HepG2 (cell line): ENCODE measurements at regions of chr6 and their contacts with region 1.

Region 1: GRCh38 chr6:120173250-120173649 is 823.7 kb upstream of the MAN1A1 start:
- DNase-seq: no peak
- ATAC-seq: no peak
- H3K4me3 ChIP-seq: no peak overlapping the region
- H3K27ac ChIP-seq: no peak overlapping the region
- H3K4me1 ChIP-seq: peaks cover 8% of the 10 kb centered on the region
- H3K27me3 ChIP-seq: no peaks in the 10 kb centered on the region
- CTCF ChIP-seq: no peak
- EP300 ChIP-seq: no peak
- POLR2A ChIP-seq: no peak
- RAD21 ChIP-seq: no peak

Region 2: GRCh38 chr6:120290964-120291363 is 117.7 kb after region 1 on chr6:
- CTCF ChIA-PET with region 1: no interaction called
- POLR2A ChIA-PET with region 1: no interaction called
- in situ Hi-C with region 1: no loop called
- intact Hi-C with region 1: loop called (anchors 1 kb)
- DNase-seq: no peak
- ATAC-seq: no peak
- H3K4me3 ChIP-seq: no peak overlapping the region
- H3K27ac ChIP-seq: no peak overlapping the region
- H3K4me1 ChIP-seq: no peaks in the 10 kb centered on the region
- H3K27me3 ChIP-seq: no peaks in the 10 kb centered on the region
- CTCF ChIP-seq: no peak
- EP300 ChIP-seq: no peak
- POLR2A ChIP-seq: no peak
- RAD21 ChIP-seq: no peak